Left ventricle myocardium superior (tissue), 1 donor: ENCODE measurements at regions of chr17 and their contacts with region 1.

Region 1: DNA sequence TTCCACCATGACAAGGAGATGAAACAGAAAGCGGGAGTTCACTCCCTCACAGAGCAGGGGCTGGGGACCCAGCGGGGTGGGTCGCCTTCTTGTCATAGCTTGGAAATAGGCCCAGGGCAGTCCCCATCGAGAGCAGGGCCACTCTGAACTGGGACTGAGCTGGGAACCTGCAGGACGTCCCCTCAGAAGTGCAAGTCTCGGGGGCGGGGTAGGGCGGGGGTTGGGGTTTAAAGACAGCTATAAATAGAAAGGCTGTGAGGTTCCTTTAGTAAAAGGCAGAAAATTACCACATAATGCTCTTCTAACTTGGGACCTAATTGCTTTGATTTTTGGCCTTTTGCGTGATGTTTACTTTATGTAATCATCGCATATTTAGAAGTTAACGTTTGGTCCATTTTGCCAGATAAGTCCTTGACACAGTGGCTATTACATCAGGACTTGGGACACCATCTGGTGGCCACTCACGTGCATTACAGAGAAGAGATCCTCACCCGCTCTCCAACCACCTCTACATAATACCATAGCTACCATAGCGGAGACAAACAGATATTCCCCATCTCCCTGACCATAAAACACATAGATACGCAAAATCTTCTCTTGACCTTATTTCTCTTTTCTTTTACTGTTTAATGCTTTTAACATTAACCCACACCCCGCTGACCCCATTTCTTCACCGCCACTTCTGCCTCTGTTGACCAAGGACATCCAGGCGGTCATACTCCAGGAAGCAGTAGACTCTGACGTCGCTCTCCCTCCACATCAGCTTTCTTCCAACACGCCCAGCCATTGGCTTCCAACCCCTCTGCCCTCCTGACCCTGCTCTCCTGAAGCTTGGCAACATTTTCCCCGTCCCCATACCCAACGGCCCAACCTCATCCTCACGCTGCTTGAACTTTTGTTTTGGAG is 27.5 kb upstream of the PIK3R6 start:
- DNase-seq: peak; percentile 54
- ATAC-seq: peak; percentile 86

Region 2: DNA sequence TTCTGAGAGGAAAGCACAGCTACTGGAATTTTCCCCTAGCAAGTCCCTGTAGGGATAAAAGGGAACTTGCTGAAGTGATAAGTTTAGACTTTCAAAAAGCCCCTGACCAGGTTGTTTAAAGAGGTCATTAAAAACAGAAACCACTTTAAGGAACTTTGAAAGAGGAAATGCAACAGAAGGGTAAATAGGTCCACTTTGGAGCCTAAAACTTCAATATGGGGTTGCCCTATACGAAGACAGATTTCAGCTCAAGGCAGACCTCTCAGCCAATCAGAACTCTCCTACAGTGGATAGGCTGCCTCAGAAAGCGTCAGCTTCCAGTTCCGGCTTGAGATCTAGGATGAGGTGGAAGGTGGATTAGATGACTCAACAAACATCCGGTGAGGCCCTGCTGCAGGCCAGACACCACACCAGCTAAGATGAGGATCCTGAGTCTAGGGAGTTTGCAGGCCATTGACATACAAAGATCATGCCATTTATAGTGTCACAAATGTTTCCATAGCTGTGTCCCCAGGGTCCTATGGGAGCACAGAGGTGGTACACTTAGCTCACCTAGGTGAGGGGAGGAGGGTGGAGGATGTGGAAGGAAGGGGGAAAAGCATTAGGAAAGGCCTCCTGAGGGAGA is 87.9 kb before region 1 on chr17:
- intact Hi-C with region 1: loop called (anchors 10 kb)
- DNase-seq: no peak
- ATAC-seq: no peak

Region 3: GRCh38 chr17:8965394-8966168 is 70.7 kb after region 1 on chr17 and contains the start of gene PIK3R5:
- intact Hi-C with region 1: no loop called
- DNase-seq: peak; percentile 67
- ATAC-seq: peak; percentile 85
- total RNA-seq, gene PIK3R5: 2.5 TPM